PC-9 (cell line): ENCODE measurements at regions of chr14 and their contacts with region 1.

Region 1: DNA sequence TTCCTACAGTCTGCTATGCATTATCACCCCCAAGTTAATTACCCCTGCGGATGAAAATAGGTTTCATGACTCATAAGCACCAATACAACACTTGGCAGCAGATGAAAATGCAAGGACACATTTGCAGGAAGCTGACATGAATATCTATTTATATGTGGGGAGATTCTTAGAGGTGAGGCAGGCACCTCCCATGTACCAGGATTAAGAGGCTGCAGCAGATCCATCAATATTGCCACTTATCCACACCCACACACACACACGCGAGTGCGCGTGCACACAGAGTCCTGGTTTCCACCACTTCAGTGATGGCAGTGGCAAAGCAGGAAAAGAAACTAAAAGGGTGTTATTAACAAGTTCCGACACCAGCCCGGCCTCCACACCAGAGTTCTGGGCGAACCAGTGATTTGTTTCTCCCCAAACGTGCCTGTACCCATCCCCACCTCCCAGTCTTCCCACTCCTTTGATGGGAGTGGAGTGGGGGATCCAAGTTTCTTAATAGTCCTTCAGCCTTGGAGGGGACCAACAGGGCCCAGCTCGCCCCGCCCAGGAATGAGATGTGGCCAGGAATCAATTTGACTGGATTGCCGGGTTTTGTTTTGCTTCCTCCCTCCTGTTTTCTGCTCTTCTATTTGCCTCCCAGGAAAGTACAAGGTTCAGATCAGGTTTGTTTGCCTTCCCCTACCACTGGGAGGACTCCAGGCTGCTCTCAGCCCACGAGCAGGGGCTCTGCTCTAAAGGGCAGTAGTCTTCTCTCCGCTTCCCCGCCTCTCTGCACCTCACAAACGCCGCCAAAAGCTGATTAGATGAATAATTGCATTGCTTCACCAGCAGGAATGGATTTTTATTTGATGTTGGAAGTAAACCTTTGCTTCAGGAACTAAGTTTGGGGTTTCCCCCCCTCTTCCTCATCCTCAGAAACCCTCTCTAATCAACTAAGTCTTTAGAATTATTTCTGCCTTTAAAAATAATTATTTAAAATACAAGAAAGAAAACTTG is 5.2 kb downstream of the IRF2BPL start:
- DNase-seq: peak in 1 of 2 experiments; percentile 61
- H3K4me3 ChIP-seq: peak overlapping the region; percentile 64
- H3K27ac ChIP-seq: peak overlapping the region; percentile 17
- H3K4me1 ChIP-seq: peaks cover 40% of the 10 kb centered on the region
- H3K27me3 ChIP-seq: no peaks in the 10 kb centered on the region
- CTCF ChIP-seq: no peak

Region 2: GRCh38 chr14:76227448-76228050 is 795.8 kb before region 1 on chr14:
- CTCF ChIA-PET with region 1: no interaction called
- POLR2A ChIA-PET with region 1: interaction called, 13 read pairs
- intact Hi-C with region 1: no loop called
- DNase-seq: peak in 1 of 2 experiments; percentile 56
- H3K4me3 ChIP-seq: no peak overlapping the region
- H3K27ac ChIP-seq: no peak overlapping the region
- H3K4me1 ChIP-seq: no peaks in the 10 kb centered on the region
- H3K27me3 ChIP-seq: no peaks in the 10 kb centered on the region
- CTCF ChIP-seq: no peak

Region 3: GRCh38 chr14:77007975-77008421 is 15.3 kb before region 1 on chr14:
- CTCF ChIA-PET with region 1: interaction called, 13 read pairs
- POLR2A ChIA-PET with region 1: interaction called, 6 read pairs
- intact Hi-C with region 1: loop called (anchors 1 kb)
- DNase-seq: peak; percentile 95 to 99
- H3K4me3 ChIP-seq: peak overlapping the region; percentile 33; the same call in 1 of the 2 replicates
- H3K27ac ChIP-seq: peak overlapping the region; percentile 77
- H3K4me1 ChIP-seq: peaks cover 89% of the 10 kb centered on the region
- H3K27me3 ChIP-seq: no peaks in the 10 kb centered on the region
- CTCF ChIP-seq: no peak

Region 4: GRCh38 chr14:77400219-77400618 is 376.9 kb after region 1 on chr14:
- CTCF ChIA-PET with region 1: no interaction called
- POLR2A ChIA-PET with region 1: no interaction called
- intact Hi-C with region 1: no loop called
- DNase-seq: no peak
- H3K4me3 ChIP-seq: no peak overlapping the region
- H3K27ac ChIP-seq: no peak overlapping the region
- H3K4me1 ChIP-seq: no peaks in the 10 kb centered on the region
- H3K27me3 ChIP-seq: no peaks in the 10 kb centered on the region
- CTCF ChIP-seq: no peak